ENCODE measurements at regions of chr1 and their contacts with region 1.

Region 1: GRCh38 chr1:77950873-77951272 is 28.0 kb downstream of the FUBP1 start:
- DNase-seq: no peak
- ATAC-seq: peak; percentile 52
- H3K4me3 Mint-ChIP-seq: no peak overlapping the region
- H3K27ac Mint-ChIP-seq: peak overlapping the region; percentile 77
- H3K4me1 Mint-ChIP-seq: peaks cover 40% of the 10 kb centered on the region
- H3K27me3 Mint-ChIP-seq: no peaks in the 10 kb centered on the region
- CTCF ChIP-seq: no peak

Region 2: DNA sequence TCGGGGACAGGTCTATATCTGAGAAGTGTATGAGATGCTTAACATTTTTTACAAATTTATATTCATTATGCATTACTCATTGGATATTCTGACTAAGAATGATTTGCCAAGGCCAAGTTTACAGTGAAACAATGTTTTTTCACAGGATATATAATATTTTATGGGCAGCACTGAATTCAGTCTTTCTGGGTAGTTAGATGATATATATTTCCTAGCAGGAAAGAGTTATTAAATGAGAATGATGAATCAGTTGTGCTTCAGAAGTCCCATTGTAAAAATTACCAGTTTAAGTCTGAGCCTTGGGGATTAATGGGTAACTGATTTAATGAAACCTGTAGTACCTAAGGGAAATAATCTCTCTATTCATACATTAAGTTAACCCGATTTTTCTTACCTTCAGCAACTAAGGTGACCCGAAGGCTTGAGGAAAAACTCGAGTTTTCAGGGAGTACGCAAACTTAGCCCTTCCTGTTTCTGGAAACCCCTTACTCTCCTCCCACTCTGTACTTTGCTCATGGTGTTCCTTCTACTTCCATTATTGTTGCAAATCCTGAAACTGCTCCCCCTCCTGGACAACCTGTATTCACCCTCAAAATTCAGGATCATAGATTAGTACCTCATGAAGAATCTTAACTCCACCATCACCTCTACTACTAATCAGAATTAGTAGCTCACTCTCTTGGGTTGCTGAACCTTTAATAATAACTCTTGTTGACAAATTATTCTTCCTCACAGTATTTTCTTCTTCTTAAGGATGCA is 534.0 kb before region 1 on chr1:
- CTCF ChIA-PET with region 1: no interaction called
- POLR2A ChIA-PET with region 1: no interaction called
- intact Hi-C with region 1: no loop called
- DNase-seq: no peak
- ATAC-seq: no peak
- H3K4me3 Mint-ChIP-seq: no peak overlapping the region
- H3K27ac Mint-ChIP-seq: no peak overlapping the region
- H3K4me1 Mint-ChIP-seq: peaks cover 15% of the 10 kb centered on the region
- H3K27me3 Mint-ChIP-seq: peaks cover 48% of the 10 kb centered on the region
- CTCF ChIP-seq: no peak

Region 3: DNA sequence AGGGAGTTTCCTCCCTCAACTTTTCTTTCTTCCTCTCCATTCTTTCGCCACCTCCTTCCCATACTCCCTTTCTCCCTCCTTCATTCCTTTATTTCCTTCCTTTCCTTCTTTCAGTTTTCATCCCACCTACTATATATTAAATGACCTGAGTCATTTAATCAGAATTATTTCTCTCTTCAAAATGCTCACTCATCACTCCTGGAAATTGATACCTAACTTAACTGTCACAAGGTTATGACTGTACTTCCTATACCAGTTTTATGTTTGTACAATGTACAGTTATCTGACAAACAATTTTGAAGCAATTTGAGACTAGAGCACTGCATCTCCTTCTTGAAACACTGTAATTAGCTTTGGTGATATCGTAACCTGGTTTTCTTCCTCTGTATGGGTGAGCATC is 21.1 kb before region 1 on chr1:
- CTCF ChIA-PET with region 1: no interaction called
- POLR2A ChIA-PET with region 1: no interaction called
- intact Hi-C with region 1: loop called (anchors 1 kb)
- DNase-seq: no peak
- ATAC-seq: no peak
- H3K4me3 Mint-ChIP-seq: no peak overlapping the region
- H3K27ac Mint-ChIP-seq: no peak overlapping the region
- H3K4me1 Mint-ChIP-seq: peaks cover 10% of the 10 kb centered on the region
- H3K27me3 Mint-ChIP-seq: no peaks in the 10 kb centered on the region
- CTCF ChIP-seq: no peak

Region 4: DNA sequence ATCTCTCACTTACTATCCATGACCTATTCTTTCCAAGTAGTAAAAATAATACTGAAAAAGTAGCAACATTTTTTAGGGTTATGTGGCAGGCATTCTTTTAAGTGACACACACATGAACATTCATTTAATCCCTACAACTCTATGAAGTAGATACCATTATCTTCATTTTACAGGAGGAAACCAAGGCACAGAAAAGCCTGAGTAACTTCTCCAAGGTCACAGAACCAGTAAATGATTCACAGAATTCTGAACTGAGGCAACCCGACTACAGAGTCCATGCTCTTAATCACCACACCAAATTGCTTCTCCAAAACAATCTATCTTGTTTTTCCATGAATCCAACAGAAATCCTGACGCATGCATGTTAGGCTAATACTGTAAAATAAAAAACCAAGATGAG is 10.5 kb after region 1 on chr1:
- CTCF ChIA-PET with region 1: no interaction called
- POLR2A ChIA-PET with region 1: no interaction called
- intact Hi-C with region 1: loop called (anchors 1 kb)
- DNase-seq: no peak
- ATAC-seq: no peak
- H3K4me3 Mint-ChIP-seq: no peak overlapping the region
- H3K27ac Mint-ChIP-seq: no peak overlapping the region
- H3K4me1 Mint-ChIP-seq: no peaks in the 10 kb centered on the region
- H3K27me3 Mint-ChIP-seq: no peaks in the 10 kb centered on the region
- CTCF ChIP-seq: no peak